ENCODE measurements at regions of chr12 and their contacts with region 1.

Region 1: GRCh38 chr12:1583421-1584078 is 10.8 kb downstream of the FBXL14 start:
- DNase-seq: peak; percentile 70

Region 2: GRCh38 chr12:1481326-1481725 is 102.2 kb before region 1 on chr12:
- CTCF ChIA-PET with region 1: no interaction called
- POLR2A ChIA-PET with region 1: no interaction called
- DNase-seq: no peak

Region 3: GRCh38 chr12:1594261-1595025 is 10.9 kb after region 1 on chr12 and contains the start of gene FBXL14:
- CTCF ChIA-PET with region 1: interaction called, 12 read pairs
- POLR2A ChIA-PET with region 1: interaction called, 4 read pairs
- DNase-seq: peak; percentile 81

Measured in HEK293T (cell line).